Activated CD4-positive, alpha-beta memory T cell treated with anti-CD3 and anti-CD28 coated beads for 36 hours (primary cell): ENCODE measurements at regions of chr2 and their contacts with region 1.

Region 1: DNA sequence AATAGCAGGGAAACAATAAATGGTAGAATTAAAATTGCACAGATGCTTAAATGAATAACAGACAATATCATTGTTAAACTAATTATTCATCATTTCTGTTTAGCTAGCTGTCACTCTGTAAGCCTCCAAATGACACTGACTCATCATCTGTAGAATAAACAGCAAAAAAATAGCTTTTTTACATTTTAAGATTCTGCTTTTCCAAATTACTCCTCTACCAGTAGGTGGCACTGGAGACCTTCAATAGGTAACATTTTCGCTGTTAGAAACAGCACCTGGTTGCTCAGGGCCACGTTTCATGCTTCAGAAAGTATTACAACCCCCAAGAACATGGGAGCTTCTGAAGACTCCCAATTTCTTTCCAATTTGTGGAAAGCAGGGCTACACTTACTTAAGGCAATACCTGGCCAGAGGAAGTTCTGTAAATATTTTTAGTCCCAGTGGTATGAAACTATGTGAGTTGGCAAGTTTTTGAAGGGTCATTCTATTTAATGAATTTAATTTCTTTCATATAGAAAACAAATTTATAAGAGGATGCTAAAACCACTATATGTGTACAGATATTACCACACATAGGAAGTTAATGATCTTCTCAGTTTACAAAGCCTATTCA is 45.4 kb downstream of the TTN start:
- DNase-seq: peak; percentile 9
- H3K4me3 Mint-ChIP-seq: no peak overlapping the region
- H3K27ac Mint-ChIP-seq: no peak overlapping the region
- H3K4me1 Mint-ChIP-seq: no peaks in the 10 kb centered on the region
- H3K27me3 Mint-ChIP-seq: no peaks in the 10 kb centered on the region

Region 2: DNA sequence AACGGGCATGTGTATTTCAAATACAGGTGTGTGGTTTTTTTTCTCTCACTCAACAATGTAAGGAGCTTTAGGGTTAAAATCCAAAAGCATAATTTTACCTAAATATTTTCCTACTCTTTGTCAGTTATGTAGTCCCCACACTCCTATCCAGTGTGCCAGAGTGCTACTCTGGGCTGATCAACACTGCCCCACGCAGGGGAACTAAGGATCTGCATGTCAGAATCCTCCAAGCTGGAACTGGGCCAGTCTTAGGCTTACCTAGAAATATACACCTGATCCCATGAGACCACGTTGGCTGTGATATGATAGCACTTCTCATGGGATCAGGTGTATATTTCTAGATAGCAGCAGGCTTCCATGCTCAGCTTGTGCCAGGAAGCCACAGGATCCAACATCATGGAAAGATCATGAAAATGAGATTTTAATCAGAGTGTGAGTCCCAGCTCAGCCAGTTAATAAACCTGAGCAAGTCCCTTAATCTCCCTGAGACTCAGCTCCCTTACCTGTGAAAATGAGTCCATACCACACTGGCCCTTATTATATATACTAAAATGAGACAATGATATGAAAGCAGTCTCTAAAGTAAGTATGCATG is 258.4 kb after region 1 on chr2:
- CTCF ChIA-PET with region 1: interaction called, 4 read pairs
- POLR2A ChIA-PET with region 1: no interaction called
- intact Hi-C with region 1: loop called (anchors 10 kb)
- DNase-seq: peak; percentile 63
- H3K4me3 Mint-ChIP-seq: no peak overlapping the region
- H3K27ac Mint-ChIP-seq: no peak overlapping the region
- H3K4me1 Mint-ChIP-seq: peaks cover 4% of the 10 kb centered on the region
- H3K27me3 Mint-ChIP-seq: no peaks in the 10 kb centered on the region

Region 3: DNA sequence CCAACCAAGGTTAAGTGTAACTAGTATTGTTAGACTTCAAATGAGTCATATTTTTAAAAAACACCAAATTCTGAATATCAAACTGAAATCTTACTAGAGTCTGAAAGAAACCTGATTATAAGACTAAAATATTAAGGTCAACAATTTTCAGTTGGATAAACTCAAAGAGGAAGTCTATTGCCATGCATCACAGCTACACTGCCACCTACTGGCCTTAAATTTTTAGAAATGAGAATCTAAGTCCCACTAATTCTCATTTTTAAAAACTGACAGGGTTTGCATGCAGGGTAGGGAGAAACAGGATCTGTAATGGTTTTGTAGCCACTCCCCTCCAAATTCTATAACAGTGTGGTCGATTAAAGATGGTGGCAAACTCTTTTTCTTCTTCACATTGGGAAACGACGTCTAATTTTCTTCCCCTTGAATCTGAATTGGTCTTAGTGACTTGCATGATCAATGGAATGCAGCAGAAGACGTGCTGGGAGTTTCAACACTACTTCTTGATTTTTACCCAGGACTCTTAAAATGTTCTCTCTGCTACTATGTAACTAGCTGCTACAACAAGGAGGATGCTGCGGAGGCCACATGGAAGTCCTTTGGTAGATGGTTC is 678.9 kb after region 1 on chr2:
- CTCF ChIA-PET with region 1: interaction called, 5 read pairs
- POLR2A ChIA-PET with region 1: no interaction called
- intact Hi-C with region 1: loop called (anchors 10 kb)
- DNase-seq: no peak
- H3K4me3 Mint-ChIP-seq: no peak overlapping the region
- H3K27ac Mint-ChIP-seq: no peak overlapping the region
- H3K4me1 Mint-ChIP-seq: no peaks in the 10 kb centered on the region
- H3K27me3 Mint-ChIP-seq: peaks cover 10% of the 10 kb centered on the region